ENCODE measurements at regions of chr9 and their contacts with region 1.

Region 1: DNA sequence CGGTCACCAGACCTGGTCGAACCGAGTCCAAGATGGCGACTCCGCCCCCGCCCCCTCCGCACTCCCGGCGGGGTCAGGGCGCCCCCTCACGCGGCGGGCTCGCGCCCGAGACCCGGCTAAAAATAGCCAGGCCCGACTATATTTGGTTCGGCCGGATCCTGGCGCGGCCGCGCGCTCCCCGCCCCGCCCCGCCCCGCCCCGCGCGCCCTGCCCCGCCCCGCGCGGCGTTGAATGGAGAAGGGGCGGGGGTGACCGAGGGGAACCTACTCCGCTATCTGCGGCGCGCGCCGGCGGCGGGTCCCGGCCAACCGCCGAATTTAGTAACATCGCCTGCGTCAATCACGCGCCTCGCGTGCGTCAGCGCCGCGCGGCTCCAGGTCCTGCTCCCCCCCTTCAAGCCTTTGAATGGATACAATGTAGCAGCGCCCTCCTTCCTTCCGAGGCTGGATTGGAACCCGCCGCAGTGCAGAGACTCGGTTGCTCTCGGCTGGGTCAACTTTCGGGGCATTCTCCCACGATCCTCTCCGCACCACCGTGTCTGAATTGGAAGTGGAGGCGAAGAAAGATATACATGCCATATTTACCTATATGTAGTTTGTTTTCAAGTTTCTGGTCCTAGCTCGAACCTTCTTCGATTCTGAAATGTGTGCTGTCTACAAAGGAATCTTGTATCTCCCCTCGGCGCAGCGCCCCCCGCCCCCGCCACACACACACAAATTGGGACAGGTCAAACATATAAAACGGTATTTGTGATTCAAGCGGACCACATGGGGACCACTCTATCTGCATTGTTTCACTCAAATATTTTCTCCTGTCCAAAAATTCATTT is 1.6 kb upstream of the NR4A3 start:
- DNase-seq: peak; percentile 81 to 99 (median 93)
- ATAC-seq: peak; percentile 52
- H3K4me3 ChIP-seq: peak overlapping the region; percentile 77 to 90
- H3K4me3 Mint-ChIP-seq: peak overlapping the region; percentile 99
- H3K27ac ChIP-seq: peak overlapping the region; percentile 87 to 88
- H3K27ac Mint-ChIP-seq: peak overlapping the region; percentile 99
- H3K4me1 ChIP-seq: peaks cover 44% of the 10 kb centered on the region
- H3K4me1 Mint-ChIP-seq: peaks cover 43% of the 10 kb centered on the region
- H3K27me3 ChIP-seq: peaks cover 21 to 33% of the 10 kb centered on the region in 2 experiments
- H3K27me3 Mint-ChIP-seq: peaks cover 24% of the 10 kb centered on the region
- CTCF ChIP-seq: no peak

Region 2: GRCh38 chr9:98101868-98102273 is 1718.2 kb before region 1 on chr9:
- CTCF ChIA-PET with region 1: no interaction called
- POLR2A ChIA-PET with region 1: no interaction called
- intact Hi-C with region 1: loop called in 1 of 2 experiments (anchors 10 kb)
- DNase-seq: peak; percentile 64 to 97 (median 82)
- ATAC-seq: peak; percentile 95
- H3K4me3 ChIP-seq: peak overlapping the region; percentile 3 to 8
- H3K4me3 Mint-ChIP-seq: peak overlapping the region; percentile 68
- H3K27ac ChIP-seq: peak overlapping the region; percentile 33 to 76
- H3K27ac Mint-ChIP-seq: peak overlapping the region; percentile 97
- H3K4me1 ChIP-seq: peaks cover 87% of the 10 kb centered on the region
- H3K4me1 Mint-ChIP-seq: peaks cover 82% of the 10 kb centered on the region
- H3K27me3 ChIP-seq: no peaks in the 10 kb centered on the region
- H3K27me3 Mint-ChIP-seq: no peaks in the 10 kb centered on the region
- CTCF ChIP-seq: no peak

Region 3: GRCh38 chr9:99184475-99185347 is 635.4 kb before region 1 on chr9:
- CTCF ChIA-PET with region 1: no interaction called
- POLR2A ChIA-PET with region 1: no interaction called
- intact Hi-C with region 1: loop called (anchors 5 to 10 kb)
- DNase-seq: peak; percentile 56 to 90 (median 80)
- ATAC-seq: peak; percentile 96
- H3K4me3 ChIP-seq: peak overlapping the region in 1 of 2 experiments; percentile 18
- H3K4me3 Mint-ChIP-seq: peak overlapping the region; percentile 41
- H3K27ac ChIP-seq: no peak overlapping the region
- H3K27ac Mint-ChIP-seq: peak overlapping the region; percentile 29
- H3K4me1 ChIP-seq: peaks cover 6% of the 10 kb centered on the region
- H3K4me1 Mint-ChIP-seq: peaks cover 15% of the 10 kb centered on the region
- H3K27me3 ChIP-seq: no peaks in the 10 kb centered on the region
- H3K27me3 Mint-ChIP-seq: no peaks in the 10 kb centered on the region
- CTCF ChIP-seq: peak; percentile 89

Region 4: GRCh38 chr9:99851500-99851822 is 31.4 kb after region 1 on chr9:
- CTCF ChIA-PET with region 1: interaction called, 5 read pairs
- POLR2A ChIA-PET with region 1: interaction called, 3 read pairs
- intact Hi-C with region 1: loop called in 1 of 2 experiments (anchors 2 kb)
- DNase-seq: peak in 8 of 9 experiments; percentile 5 to 88 (median 43)
- ATAC-seq: peak; percentile 77
- H3K4me3 ChIP-seq: no peak overlapping the region
- H3K4me3 Mint-ChIP-seq: peak overlapping the region; percentile 4
- H3K27ac ChIP-seq: peak overlapping the region in 1 of 2 experiments; percentile 58
- H3K27ac Mint-ChIP-seq: no peak overlapping the region
- H3K4me1 ChIP-seq: peaks cover 19% of the 10 kb centered on the region
- H3K4me1 Mint-ChIP-seq: peaks cover 32% of the 10 kb centered on the region
- H3K27me3 ChIP-seq: no peaks in the 10 kb centered on the region
- H3K27me3 Mint-ChIP-seq: no peaks in the 10 kb centered on the region
- CTCF ChIP-seq: no peak

Region 5: GRCh38 chr9:100098887-100099721 is 279.0 kb after region 1 on chr9 and contains the starts of genes ERP44 and INVS:
- CTCF ChIA-PET with region 1: no interaction called
- POLR2A ChIA-PET with region 1: no interaction called
- intact Hi-C with region 1: loop called (anchors 2 to 5 kb)
- DNase-seq: peak; percentile 93 to 99 (median 96)
- ATAC-seq: peak; percentile 99
- H3K4me3 ChIP-seq: peak within 1 kb of the TSS; percentile 95 to 98
- H3K4me3 Mint-ChIP-seq: peak within 1 kb of the TSS; percentile 99
- H3K27ac ChIP-seq: peak within 1 kb of the TSS; percentile 72 to 85
- H3K27ac Mint-ChIP-seq: peak within 1 kb of the TSS; percentile 97
- H3K4me1 ChIP-seq: peaks cover 31% of the 10 kb centered on the region
- H3K4me1 Mint-ChIP-seq: peaks cover 44% of the 10 kb centered on the region
- H3K27me3 ChIP-seq: no peaks in the 10 kb centered on the region
- H3K27me3 Mint-ChIP-seq: no peaks in the 10 kb centered on the region
- CTCF ChIP-seq: no peak
- total RNA-seq, gene ERP44: 7.6 to 8.5 TPM
- total RNA-seq, gene INVS: 12.5 to 13.2 TPM

Region 6: DNA sequence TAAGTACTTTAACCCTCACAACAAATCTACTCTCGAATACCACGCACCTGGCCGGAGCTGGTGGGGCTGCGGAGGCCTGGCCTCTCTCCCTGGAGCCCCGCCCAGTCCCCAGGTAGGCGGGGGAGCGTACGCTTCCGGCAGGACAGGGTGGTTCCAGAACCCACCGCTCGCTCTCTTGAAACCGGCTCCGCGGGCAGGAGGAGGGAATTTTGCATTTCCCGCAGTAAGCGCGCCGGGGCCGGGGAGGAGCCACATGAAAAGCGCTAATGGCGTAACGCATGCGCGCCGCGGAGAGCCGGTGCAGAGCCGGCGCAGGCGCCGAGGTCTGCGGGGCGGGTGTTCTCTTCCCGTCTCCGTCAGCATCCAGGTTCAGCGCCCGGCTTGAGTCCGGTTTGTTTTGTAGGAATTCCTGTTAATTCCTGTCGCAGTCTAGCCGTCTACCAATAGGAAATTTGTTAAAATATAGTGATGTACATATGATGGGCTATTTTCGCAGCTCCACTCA is 778.6 kb after region 1 on chr9:
- CTCF ChIA-PET with region 1: no interaction called
- POLR2A ChIA-PET with region 1: no interaction called
- intact Hi-C with region 1: loop called in 1 of 2 experiments (anchors 2 kb)
- DNase-seq: peak; percentile 60 to 90 (median 79)
- ATAC-seq: peak; percentile 86
- H3K4me3 ChIP-seq: peak overlapping the region; percentile 54 to 59
- H3K4me3 Mint-ChIP-seq: peak overlapping the region; percentile 80
- H3K27ac ChIP-seq: peak overlapping the region in 1 of 2 experiments; percentile 49
- H3K27ac Mint-ChIP-seq: peak overlapping the region; percentile 73
- H3K4me1 ChIP-seq: peaks cover 7% of the 10 kb centered on the region
- H3K4me1 Mint-ChIP-seq: peaks cover 24% of the 10 kb centered on the region
- H3K27me3 ChIP-seq: no peaks in the 10 kb centered on the region
- H3K27me3 Mint-ChIP-seq: no peaks in the 10 kb centered on the region
- CTCF ChIP-seq: no peak

Measured in CD8-positive, alpha-beta T cell (primary cell).